GM12878 (cell line): ENCODE measurements at regions of chr12 and their contacts with region 1.

Region 1: GRCh38 chr12:92493816-92494215 is 209.0 kb upstream of the PLEKHG7 start:
- DNase-seq: no peak
- ATAC-seq: peak; percentile 57
- H3K4me3 ChIP-seq: no peak overlapping the region
- H3K27ac ChIP-seq: peak overlapping the region; percentile 81
- H3K4me1 ChIP-seq: peaks cover 74% of the 10 kb centered on the region
- H3K27me3 ChIP-seq: no peaks in the 10 kb centered on the region
- CTCF ChIP-seq: no peak
- EP300 ChIP-seq: peak in 1 of 2 experiments; percentile 36; a peak in 1 of 4 replicates
- POLR2A ChIP-seq: no peak
- RAD21 ChIP-seq: no peak

Region 2: GRCh38 chr12:92237762-92238523 is 255.9 kb before region 1 on chr12:
- CTCF ChIA-PET with region 1: no interaction called
- POLR2A ChIA-PET with region 1: no interaction called
- RAD21 ChIA-PET with region 1: no interaction called
- SMC1A ChIA-PET with region 1: no interaction called
- in situ Hi-C with region 1: no loop called
- intact Hi-C with region 1: no loop called
- DNase-seq: no peak
- ATAC-seq: no peak
- H3K4me3 ChIP-seq: no peak overlapping the region
- H3K27ac ChIP-seq: no peak overlapping the region
- H3K4me1 ChIP-seq: no peaks in the 10 kb centered on the region
- H3K27me3 ChIP-seq: no peaks in the 10 kb centered on the region
- CTCF ChIP-seq: no peak
- EP300 ChIP-seq: no peak
- POLR2A ChIP-seq: no peak
- RAD21 ChIP-seq: no peak

Region 3: DNA sequence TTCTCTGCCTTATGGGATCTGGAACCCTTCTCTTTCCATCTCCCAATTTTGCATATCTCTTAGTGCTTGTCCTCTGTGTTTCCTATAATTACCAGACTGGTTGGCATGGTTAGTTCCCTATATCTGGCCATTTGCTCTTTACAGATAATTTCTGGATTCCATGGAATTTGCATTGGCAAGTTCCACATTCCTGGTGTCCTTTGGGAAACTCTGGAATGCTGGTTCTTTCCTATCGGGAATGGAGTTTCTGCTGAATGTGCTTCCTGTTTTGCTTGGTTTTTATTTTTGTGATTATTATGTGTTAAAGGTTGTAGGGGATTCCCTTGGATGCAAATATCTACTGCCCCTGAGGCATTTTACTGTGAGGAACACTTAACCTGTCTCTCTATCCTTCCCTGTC is 155.1 kb before region 1 on chr12:
- CTCF ChIA-PET with region 1: no interaction called
- POLR2A ChIA-PET with region 1: no interaction called
- RAD21 ChIA-PET with region 1: no interaction called
- SMC1A ChIA-PET with region 1: no interaction called
- in situ Hi-C with region 1: no loop called
- intact Hi-C with region 1: no loop called
- DNase-seq: no peak
- ATAC-seq: no peak
- H3K4me3 ChIP-seq: no peak overlapping the region
- H3K27ac ChIP-seq: no peak overlapping the region
- H3K4me1 ChIP-seq: no peaks in the 10 kb centered on the region
- H3K27me3 ChIP-seq: no peaks in the 10 kb centered on the region
- CTCF ChIP-seq: no peak
- EP300 ChIP-seq: no peak
- POLR2A ChIP-seq: no peak
- RAD21 ChIP-seq: no peak

Region 4: GRCh38 chr12:92349635-92350034 is 144.2 kb before region 1 on chr12:
- CTCF ChIA-PET with region 1: no interaction called
- POLR2A ChIA-PET with region 1: no interaction called
- RAD21 ChIA-PET with region 1: no interaction called
- SMC1A ChIA-PET with region 1: no interaction called
- in situ Hi-C with region 1: no loop called
- intact Hi-C with region 1: no loop called
- DNase-seq: no peak
- ATAC-seq: no peak
- H3K4me3 ChIP-seq: no peak overlapping the region
- H3K27ac ChIP-seq: no peak overlapping the region
- H3K4me1 ChIP-seq: no peaks in the 10 kb centered on the region
- H3K27me3 ChIP-seq: no peaks in the 10 kb centered on the region
- CTCF ChIP-seq: no peak
- EP300 ChIP-seq: no peak
- POLR2A ChIP-seq: no peak
- RAD21 ChIP-seq: no peak

Region 5: GRCh38 chr12:92431146-92431545 is 62.7 kb before region 1 on chr12:
- CTCF ChIA-PET with region 1: no interaction called
- POLR2A ChIA-PET with region 1: interaction called, 3 read pairs
- RAD21 ChIA-PET with region 1: interaction called, 6 read pairs
- SMC1A ChIA-PET with region 1: interaction called, 14 read pairs
- in situ Hi-C with region 1: no loop called
- intact Hi-C with region 1: no loop called
- DNase-seq: no peak
- ATAC-seq: peak; percentile 64
- H3K4me3 ChIP-seq: no peak overlapping the region
- H3K27ac ChIP-seq: peak overlapping the region; percentile 10
- H3K4me1 ChIP-seq: peaks cover 46% of the 10 kb centered on the region
- H3K27me3 ChIP-seq: no peaks in the 10 kb centered on the region
- CTCF ChIP-seq: peak; percentile 6 to 42 (median 40); a peak in 3 of 6 replicates
- EP300 ChIP-seq: no peak
- POLR2A ChIP-seq: no peak
- RAD21 ChIP-seq: peak; percentile 61

Region 6: DNA sequence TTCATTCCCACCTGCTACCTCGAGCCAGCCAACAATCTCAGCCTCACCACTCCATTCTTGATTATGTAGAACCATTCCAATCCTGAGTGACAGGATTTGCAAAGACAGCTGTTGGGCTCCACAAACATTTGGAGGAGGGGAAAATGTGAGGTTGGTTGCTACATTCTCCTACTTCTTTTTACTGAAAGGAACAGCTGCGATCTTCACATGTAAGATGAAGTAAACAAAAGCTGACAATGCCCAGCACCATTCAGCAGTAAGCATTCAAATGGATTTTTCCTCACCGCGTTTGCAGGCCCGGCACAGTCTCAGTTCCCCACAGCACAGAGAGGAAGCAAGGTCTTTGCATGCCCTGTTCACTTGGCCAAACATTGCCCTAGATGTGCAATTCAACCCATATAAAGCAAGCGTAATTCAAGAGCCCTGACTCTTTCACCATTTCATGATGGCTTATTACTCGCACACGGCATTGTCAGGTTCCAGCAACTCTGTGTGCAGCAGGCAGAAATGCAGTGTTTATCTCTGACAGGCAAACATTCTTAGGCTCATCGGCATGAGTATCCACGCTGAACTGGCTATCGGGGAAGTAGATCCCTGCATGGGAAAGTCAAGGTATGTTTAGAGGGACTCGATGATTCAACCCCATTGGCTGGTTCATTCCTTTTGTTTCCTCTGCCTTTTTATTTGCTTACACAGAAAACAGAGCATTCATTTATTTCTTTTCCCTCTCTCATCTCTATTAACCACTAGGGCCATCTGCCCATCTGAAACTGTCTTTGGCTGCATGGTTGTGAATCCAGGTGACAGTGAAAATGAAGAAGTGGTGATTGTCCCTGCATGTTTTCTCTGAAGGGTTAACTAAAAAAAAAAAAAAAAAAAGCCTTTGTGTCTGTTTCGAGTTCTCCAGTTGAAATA is 27.2 kb before region 1 on chr12:
- CTCF ChIA-PET with region 1: interaction called, 13 read pairs
- POLR2A ChIA-PET with region 1: interaction called, 18 read pairs
- RAD21 ChIA-PET with region 1: interaction called, 97 read pairs
- SMC1A ChIA-PET with region 1: interaction called, 51 read pairs
- in situ Hi-C with region 1: no loop called
- intact Hi-C with region 1: loop called (anchors 1 kb)
- DNase-seq: peak; percentile 90
- ATAC-seq: peak; percentile 39
- H3K4me3 ChIP-seq: peak overlapping the region; percentile 82
- H3K27ac ChIP-seq: peak overlapping the region; percentile 99
- H3K4me1 ChIP-seq: peaks cover 62% of the 10 kb centered on the region
- H3K27me3 ChIP-seq: no peaks in the 10 kb centered on the region
- CTCF ChIP-seq: no peak
- EP300 ChIP-seq: peak; percentile 65 to 70; a peak in 3 of 4 replicates
- POLR2A ChIP-seq: peak; percentile 85
- RAD21 ChIP-seq: peak; percentile 5

Region 7: DNA sequence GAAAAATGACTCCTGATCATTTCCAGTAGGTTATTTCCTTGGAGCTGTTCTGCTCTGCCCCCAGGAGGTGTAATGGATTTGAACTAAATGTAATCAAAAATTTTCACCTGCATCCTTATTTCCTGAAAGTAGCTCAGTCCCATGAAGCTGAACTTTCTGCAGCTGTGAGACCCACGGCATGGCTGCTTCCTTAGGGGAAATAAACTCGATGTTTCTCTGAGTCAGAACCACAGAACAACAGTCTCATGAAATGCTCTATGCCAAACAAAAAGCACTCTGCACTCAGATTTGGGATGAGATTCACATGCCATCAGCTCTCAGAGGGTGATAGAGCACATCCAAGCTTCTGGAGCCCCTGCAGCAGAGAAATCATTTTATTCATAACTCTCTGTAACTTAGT is 15.1 kb before region 1 on chr12:
- CTCF ChIA-PET with region 1: interaction called, 16 read pairs
- POLR2A ChIA-PET with region 1: interaction called, 49 read pairs
- RAD21 ChIA-PET with region 1: interaction called, 36 read pairs
- SMC1A ChIA-PET with region 1: interaction called, 292 read pairs
- in situ Hi-C with region 1: no loop called
- intact Hi-C with region 1: no loop called
- DNase-seq: no peak
- ATAC-seq: no peak; the same call in 2 of the 3 replicates
- H3K4me3 ChIP-seq: no peak overlapping the region
- H3K27ac ChIP-seq: no peak overlapping the region
- H3K4me1 ChIP-seq: peaks cover 9% of the 10 kb centered on the region; the same call in 1 of the 2 replicates
- H3K27me3 ChIP-seq: no peaks in the 10 kb centered on the region
- CTCF ChIP-seq: no peak
- EP300 ChIP-seq: no peak
- POLR2A ChIP-seq: no peak
- RAD21 ChIP-seq: no peak

Region 8: DNA sequence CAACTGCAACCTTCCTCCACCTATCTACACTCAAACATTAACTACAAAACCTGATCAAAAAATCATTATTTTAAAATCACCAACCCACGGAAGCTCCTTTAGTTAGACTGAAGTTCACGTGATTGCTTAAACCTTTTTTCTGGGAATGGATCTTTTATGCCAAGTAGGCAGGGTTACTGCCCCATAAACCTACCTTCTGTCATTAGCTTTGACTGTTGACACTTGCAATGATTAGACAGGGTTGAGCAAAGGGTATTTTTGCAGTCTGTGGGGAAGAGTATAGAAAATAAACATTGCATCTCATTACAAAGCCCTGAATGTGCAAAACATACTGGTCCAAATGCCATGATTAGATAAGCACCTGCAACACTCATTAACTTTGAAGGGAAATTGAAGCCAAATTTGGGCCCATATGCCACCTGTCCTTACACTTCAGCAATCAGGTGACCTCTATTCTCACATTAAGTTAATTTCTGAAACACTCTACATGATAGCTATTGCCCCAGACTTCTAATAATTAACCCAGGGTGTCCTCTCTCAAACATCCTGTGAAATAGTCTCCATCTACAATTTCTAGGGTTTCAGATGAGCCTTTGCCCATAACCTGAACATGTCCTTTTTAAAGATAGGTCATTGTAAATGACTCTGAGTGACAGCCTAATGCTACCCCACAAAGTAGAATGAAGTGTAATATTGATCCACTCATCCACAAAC is 53.0 kb after region 1 on chr12:
- CTCF ChIA-PET with region 1: interaction called, 6 read pairs
- POLR2A ChIA-PET with region 1: interaction called, 5 read pairs
- RAD21 ChIA-PET with region 1: interaction called, 15 read pairs
- SMC1A ChIA-PET with region 1: interaction called, 120 read pairs
- in situ Hi-C with region 1: no loop called
- intact Hi-C with region 1: no loop called
- DNase-seq: no peak
- ATAC-seq: peak; percentile 60
- H3K4me3 ChIP-seq: no peak overlapping the region
- H3K27ac ChIP-seq: no peak overlapping the region
- H3K4me1 ChIP-seq: peaks cover 43% of the 10 kb centered on the region
- H3K27me3 ChIP-seq: no peaks in the 10 kb centered on the region
- CTCF ChIP-seq: no peak
- EP300 ChIP-seq: peak in 1 of 2 experiments; percentile 52; a peak in 2 of 4 replicates
- POLR2A ChIP-seq: no peak
- RAD21 ChIP-seq: no peak

Region 9: DNA sequence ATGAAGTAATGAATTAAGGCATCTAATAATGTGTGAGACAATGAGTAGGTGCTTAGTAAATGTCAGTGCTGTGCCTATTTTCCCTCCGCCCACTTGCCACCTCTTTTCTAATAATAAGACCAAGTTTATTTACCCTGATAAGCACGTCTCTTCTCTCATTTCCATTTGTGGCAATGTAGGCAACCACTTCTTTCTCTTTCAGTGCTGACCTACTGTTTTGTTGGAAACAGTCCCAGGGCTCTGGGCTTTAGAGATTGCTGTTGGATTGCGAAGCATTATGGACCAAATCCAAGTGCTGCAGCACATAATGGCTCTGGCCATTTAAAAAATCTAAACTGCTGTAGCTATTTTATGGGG is 67.7 kb after region 1 on chr12:
- CTCF ChIA-PET with region 1: interaction called, 11 read pairs
- POLR2A ChIA-PET with region 1: interaction called, 11 read pairs
- RAD21 ChIA-PET with region 1: interaction called, 356 read pairs
- SMC1A ChIA-PET with region 1: interaction called, 805 read pairs
- in situ Hi-C with region 1: no loop called
- intact Hi-C with region 1: no loop called
- DNase-seq: no peak
- ATAC-seq: peak; percentile 13
- H3K4me3 ChIP-seq: peak overlapping the region; percentile 50; the same call in 1 of the 2 replicates
- H3K27ac ChIP-seq: peak overlapping the region; percentile 36
- H3K4me1 ChIP-seq: peaks cover 32% of the 10 kb centered on the region
- H3K27me3 ChIP-seq: no peaks in the 10 kb centered on the region
- CTCF ChIP-seq: no peak
- EP300 ChIP-seq: peak in 1 of 2 experiments; percentile 35; a peak in 1 of 4 replicates
- POLR2A ChIP-seq: no peak
- RAD21 ChIP-seq: no peak

Region 10: DNA sequence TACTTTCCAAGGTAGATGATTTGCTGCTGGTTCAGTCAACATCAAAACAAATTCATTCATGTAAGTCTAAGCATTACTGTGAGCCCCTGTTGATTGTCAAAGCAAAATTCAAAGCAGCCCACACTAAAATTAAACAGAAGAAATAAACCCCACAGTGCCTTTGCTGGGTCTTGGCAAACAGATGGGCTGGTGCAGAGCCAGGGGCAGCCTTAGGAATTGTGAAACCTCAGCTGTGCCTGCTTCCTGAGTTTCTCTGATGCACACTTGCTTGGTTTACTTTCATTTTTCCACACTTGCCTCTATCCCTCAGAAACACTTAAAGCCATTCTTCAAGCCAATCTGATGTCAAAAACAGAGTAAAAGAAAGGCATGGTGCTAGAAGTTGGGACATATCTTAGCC is 202.4 kb after region 1 on chr12:
- CTCF ChIA-PET with region 1: no interaction called
- POLR2A ChIA-PET with region 1: no interaction called
- RAD21 ChIA-PET with region 1: no interaction called
- SMC1A ChIA-PET with region 1: no interaction called
- in situ Hi-C with region 1: no loop called
- intact Hi-C with region 1: no loop called
- DNase-seq: no peak
- ATAC-seq: no peak
- H3K4me3 ChIP-seq: no peak overlapping the region
- H3K27ac ChIP-seq: no peak overlapping the region
- H3K4me1 ChIP-seq: no peaks in the 10 kb centered on the region
- H3K27me3 ChIP-seq: no peaks in the 10 kb centered on the region
- CTCF ChIP-seq: no peak
- EP300 ChIP-seq: no peak
- POLR2A ChIP-seq: no peak
- RAD21 ChIP-seq: no peak